ENCODE measurements at regions of chr17 and their contacts with region 1.

Region 1: DNA sequence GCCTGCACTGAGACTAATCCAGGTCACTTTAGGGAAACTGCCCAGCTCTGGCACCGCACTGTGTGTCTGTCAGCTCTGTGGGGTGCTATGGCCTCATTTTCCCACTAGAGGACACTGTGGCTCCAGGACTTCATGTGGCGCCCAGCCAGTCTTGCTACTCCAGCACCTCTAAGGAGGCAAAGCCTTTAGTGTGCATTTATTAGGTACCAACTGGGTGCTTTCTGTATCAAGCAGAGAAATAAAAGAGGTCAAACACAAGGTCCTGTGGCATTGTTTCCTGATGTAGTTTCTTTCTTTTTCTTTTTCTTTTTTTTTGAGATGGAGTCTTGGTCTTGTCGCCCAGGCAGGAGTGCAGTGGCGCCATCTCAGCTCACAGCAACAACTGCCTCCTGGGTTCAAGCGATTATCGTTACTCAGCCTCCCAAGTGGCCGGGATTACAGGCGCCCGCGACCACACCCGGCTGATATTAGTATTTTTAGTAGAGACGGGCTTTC is 12.5 kb upstream of the RHBDL3 start:
- DNase-seq: peak; percentile 43 to 84 (median 72)
- ATAC-seq: peak; percentile 99
- H3K4me3 ChIP-seq: no peak overlapping the region
- H3K27ac ChIP-seq: no peak overlapping the region
- H3K4me1 ChIP-seq: no peaks in the 10 kb centered on the region
- H3K27me3 ChIP-seq: no peaks in the 10 kb centered on the region
- CTCF ChIP-seq: peak; percentile 86 to 95

Region 2: GRCh38 chr17:32319548-32319905 is 66.4 kb after region 1 on chr17:
- intact Hi-C with region 1: loop called in 1 of 2 experiments (anchors 5 kb)
- DNase-seq: peak in 3 of 4 donors; percentile 72 to 91 (median 78)
- ATAC-seq: peak; percentile 97
- H3K4me3 ChIP-seq: peak overlapping the region in 1 of 2 donors; percentile 30
- H3K27ac ChIP-seq: no peak overlapping the region
- H3K4me1 ChIP-seq: peaks cover 0 to 10% of the 10 kb centered on the region in 2 donors
- H3K27me3 ChIP-seq: no peaks in the 10 kb centered on the region
- CTCF ChIP-seq: peak; percentile 95 to 96

Measured in left lung (tissue), 14 donors.